ENCODE measurements at regions of chr13 and their contacts with region 1.

Region 1: DNA sequence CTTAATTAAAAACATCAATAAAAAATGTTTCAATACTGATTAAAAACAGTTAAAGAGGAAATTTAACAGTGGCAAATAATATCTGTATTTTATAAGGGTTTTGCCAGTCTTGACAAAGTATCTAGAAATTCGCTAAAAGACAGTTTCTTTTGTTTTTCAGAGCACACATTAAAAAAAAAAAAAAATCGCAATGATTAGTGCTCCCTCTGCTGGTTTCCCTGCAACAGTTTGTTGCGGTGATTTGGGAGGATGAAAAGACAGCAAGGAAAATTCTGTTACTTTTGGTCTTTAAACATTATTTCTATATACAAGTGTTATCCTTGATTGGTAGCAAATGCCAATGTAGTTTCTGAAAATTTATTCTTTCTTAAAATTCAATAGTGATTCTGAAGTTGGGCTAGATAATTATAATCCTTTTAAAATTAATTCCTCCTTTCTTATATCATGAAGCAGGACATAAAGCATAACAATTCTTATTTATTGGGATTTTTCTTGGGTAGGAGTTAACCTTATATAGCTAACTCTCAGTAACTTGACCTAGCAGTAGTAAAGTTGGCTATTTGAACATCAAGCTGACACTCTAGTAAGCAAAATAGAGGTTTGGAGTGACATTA is 23.1 kb upstream of the SPRY2 start:
- DNase-seq: no peak
- H3K4me3 ChIP-seq: no peak overlapping the region
- H3K27ac ChIP-seq: no peak overlapping the region
- H3K4me1 ChIP-seq: peaks cover 0 to 9% (median 5%) of the 10 kb centered on the region in 4 experiments; a peak in 5 of 7 replicates
- H3K27me3 ChIP-seq: no peaks in the 10 kb centered on the region; a peak in 1 of 7 replicates
- CTCF ChIP-seq: peak in 2 of 3 experiments; percentile 53 to 58; a peak in 2 of 4 replicates
- EP300 ChIP-seq: no peak
- POLR2A ChIP-seq: no peak
- RAD21 ChIP-seq: peak; percentile 70 to 77

Region 2: DNA sequence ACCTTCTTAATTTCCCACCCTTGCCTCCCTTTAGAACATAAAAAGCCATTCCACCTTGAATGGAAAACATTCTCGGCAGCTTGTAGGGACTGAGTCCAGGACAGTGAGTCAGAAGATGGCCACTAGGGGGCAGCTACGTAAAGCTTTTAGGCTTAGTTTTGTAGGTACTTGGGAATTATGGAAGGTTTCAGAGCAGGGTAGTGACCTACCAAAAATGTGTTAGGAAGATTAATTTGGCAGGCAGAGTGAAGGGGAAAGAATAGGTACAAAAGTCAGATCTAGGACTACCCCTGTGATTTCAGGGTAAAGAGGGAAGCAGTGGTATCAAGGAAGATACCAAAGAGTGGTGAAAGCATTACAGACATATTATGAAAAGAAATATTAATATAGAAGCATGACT is 684.7 kb before region 1 on chr13:
- CTCF ChIA-PET with region 1: interaction called, 11 read pairs
- POLR2A ChIA-PET with region 1: no interaction called
- DNase-seq: peak; percentile 21 to 77
- H3K4me3 ChIP-seq: no peak overlapping the region
- H3K27ac ChIP-seq: no peak overlapping the region
- H3K4me1 ChIP-seq: no peaks in the 10 kb centered on the region
- H3K27me3 ChIP-seq: no peaks in the 10 kb centered on the region
- CTCF ChIP-seq: peak; percentile 58 to 89 (median 65)
- EP300 ChIP-seq: no peak
- POLR2A ChIP-seq: no peak
- RAD21 ChIP-seq: peak; percentile 93 to 94

Region 3: GRCh38 chr13:80348314-80348713 is 15.7 kb before region 1 on chr13:
- CTCF ChIA-PET with region 1: interaction called, 61 read pairs
- POLR2A ChIA-PET with region 1: interaction called, 34 read pairs
- DNase-seq: no peak
- H3K4me3 ChIP-seq: no peak overlapping the region
- H3K27ac ChIP-seq: no peak overlapping the region
- H3K4me1 ChIP-seq: no peaks in the 10 kb centered on the region; a peak in 2 of 7 replicates
- H3K27me3 ChIP-seq: no peaks in the 10 kb centered on the region; a peak in 1 of 7 replicates
- CTCF ChIP-seq: no peak
- EP300 ChIP-seq: no peak
- POLR2A ChIP-seq: no peak
- RAD21 ChIP-seq: no peak